ENCODE measurements at regions of chr1 and their contacts with region 1.

Region 1: DNA sequence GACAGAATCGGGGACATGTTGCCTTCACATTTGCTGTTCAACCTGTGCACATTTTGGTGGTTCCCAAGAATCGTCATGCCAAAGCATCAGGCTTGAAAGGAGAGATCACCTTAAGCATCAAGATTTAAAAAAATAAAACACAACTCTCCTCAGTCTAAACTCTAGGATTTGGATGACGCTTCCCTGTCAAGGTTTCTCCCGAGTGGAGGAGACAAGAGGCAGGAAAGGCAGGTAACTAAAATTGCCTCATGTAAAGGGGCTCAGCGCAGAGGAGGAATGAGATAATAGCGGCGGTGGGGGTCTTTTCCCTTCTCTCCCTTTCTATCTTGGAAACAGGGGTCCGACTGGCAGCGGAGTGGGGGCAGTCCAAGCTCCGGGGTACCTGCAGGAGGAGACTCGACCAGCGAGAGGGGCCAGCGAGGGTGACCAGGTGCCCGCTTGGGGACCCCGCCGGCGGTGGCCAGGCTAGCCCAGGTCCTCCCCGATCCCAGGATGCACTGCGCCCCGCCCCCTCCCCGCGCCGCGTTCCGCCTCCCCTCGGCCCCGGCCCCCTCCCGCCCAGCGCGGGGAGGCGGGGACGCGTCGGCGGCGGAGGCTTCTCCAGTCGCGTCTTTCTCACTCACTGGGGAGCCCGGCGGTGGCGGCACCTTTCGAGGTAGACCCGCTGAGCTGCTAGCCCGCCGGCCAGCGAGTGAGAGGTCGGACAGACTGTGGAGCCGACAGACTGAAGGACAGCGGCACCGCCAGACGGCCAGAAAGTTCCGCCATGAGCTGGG is at the start of gene FNBP1L:
- DNase-seq: peak; percentile 84
- H3K4me3 ChIP-seq: peak within 1 kb of the TSS; percentile 72 to 96
- H3K27ac ChIP-seq: peak within 1 kb of the TSS; percentile 88 to 92
- H3K4me1 ChIP-seq: no peaks in the 10 kb centered on the region
- H3K27me3 ChIP-seq: no peaks in the 10 kb centered on the region
- CTCF ChIP-seq: no peak
- POLR2A ChIP-seq: peak; percentile 82
- total RNA-seq, gene FNBP1L: 41.1 to 49.7 TPM

Region 2: GRCh38 chr1:93615582-93616150 is 168.0 kb after region 1 on chr1:
- intact Hi-C with region 1: loop called (anchors 5 kb)
- DNase-seq: no peak
- H3K4me3 ChIP-seq: no peak overlapping the region
- H3K27ac ChIP-seq: no peak overlapping the region
- H3K4me1 ChIP-seq: no peaks in the 10 kb centered on the region
- H3K27me3 ChIP-seq: no peaks in the 10 kb centered on the region
- CTCF ChIP-seq: no peak
- POLR2A ChIP-seq: no peak

Region 3: DNA sequence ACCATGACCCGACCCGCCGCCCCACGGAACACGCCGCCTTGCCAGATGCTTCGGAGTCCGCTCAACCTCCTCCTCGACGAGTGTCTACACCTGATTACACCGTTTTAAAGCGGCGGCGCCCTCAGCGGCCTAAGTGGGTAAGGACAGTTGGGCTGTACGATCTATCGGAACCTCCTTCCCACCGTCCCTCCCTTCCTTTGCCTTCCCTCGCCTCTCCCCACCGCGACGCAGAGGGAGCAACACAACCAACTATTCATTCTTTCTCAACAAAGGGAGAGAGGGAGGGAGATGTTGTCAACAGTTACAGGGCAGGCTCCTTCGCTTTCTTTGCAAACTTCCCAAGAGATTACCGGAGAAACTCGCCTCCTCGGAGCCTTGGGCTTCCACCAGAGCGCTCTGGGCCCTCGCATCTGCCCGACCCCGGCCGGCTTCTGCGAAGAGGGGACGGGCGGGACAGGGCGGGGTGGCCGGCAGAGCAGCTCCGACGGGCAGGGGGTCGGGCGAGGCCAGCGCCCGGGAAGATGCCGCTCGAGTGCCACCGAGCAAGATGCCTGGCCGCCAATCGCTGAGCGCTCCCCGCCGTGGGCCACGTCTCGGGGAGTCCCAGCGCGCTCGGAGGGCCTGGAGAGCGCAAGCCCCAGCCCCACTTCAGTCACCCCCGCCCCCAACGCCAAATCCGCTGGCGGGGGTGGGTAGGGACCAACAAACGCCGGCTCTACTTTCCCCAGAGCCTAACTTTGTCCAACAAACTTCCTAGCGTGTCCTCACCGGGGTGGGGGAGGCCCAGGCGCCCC is 233.2 kb after region 1 on chr1:
- intact Hi-C with region 1: loop called (anchors 10 kb)
- DNase-seq: peak; percentile 90
- H3K4me3 ChIP-seq: peak overlapping the region; percentile 50 to 68
- H3K27ac ChIP-seq: peak overlapping the region; percentile 79 to 90
- H3K4me1 ChIP-seq: no peaks in the 10 kb centered on the region
- H3K27me3 ChIP-seq: no peaks in the 10 kb centered on the region
- CTCF ChIP-seq: peak in 3 of 4 experiments; percentile 21 to 82 (median 76)
- POLR2A ChIP-seq: peak; percentile 78

Measured in prostate gland (tissue), 2 donors.